ENCODE measurements at regions of chr5 and their contacts with region 1.

Region 1: GRCh38 chr5:133952729-133953567 is 15.5 kb downstream of the C5orf15 start:
- DNase-seq: peak; percentile 79

Region 2: GRCh38 chr5:133968049-133968980 is 15.4 kb after region 1 on chr5 and contains the start of gene C5orf15:
- intact Hi-C with region 1: loop called (anchors 1 kb)
- DNase-seq: peak; percentile 98
- total RNA-seq, gene C5orf15: 22.5 TPM

Measured in cardiac septum (tissue), 1 donor.